CD4-positive, alpha-beta memory T cell (primary cell): ENCODE measurements at regions of chr2 and their contacts with region 1.

Region 1: DNA sequence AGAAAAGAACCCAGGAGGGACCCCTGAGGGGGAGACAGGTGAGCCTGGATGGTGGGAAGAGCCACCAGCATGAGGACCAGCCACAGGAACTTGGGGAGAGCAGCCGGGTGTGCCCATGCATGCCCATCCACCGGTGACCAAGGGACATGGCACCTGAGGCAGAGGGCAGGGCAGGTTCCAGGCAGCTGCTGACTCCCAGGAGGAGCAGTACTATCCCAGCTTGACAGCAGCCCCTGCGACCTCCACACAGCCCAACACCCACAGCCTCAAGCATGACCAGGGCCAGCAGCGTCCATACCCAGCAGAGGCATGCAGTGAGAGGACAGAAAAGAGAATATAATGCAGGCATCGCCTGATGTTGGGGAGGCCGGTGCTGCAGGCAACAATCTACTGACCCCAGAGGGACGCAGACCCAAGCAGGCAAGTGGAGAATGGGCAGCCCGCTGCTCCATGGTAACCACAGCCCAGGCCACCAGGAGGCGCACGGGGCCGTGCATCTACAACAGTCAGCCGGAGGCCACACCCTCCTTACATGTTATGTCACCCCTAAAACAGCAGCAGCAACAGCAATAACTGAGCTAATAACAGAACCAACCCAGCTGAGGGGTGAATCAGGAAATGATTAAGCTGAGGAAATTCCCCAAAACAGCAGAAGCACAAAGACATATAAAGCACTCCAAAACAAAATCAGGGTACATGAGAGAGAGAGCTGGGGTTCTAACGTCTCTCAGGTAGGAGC is 44.1 kb downstream of the ANKMY1 start:
- DNase-seq: peak; percentile 78 to 89 (median 80)
- H3K4me3 ChIP-seq: no peak overlapping the region
- H3K4me3 Mint-ChIP-seq: peak overlapping the region in 3 of 8 donors; percentile 2 to 73 (median 12)
- H3K27ac ChIP-seq: peak overlapping the region; percentile 17
- H3K27ac Mint-ChIP-seq: peak overlapping the region; percentile 16 to 95 (median 87)
- H3K4me1 ChIP-seq: peaks cover 13% of the 10 kb centered on the region
- H3K4me1 Mint-ChIP-seq: peaks cover 7 to 12% (median 11%) of the 10 kb centered on the region in 4 donors
- H3K27me3 ChIP-seq: no peaks in the 10 kb centered on the region
- H3K27me3 Mint-ChIP-seq: no peaks in the 10 kb centered on the region

Region 2: GRCh38 chr2:240553956-240554480 is 40.3 kb after region 1 on chr2:
- CTCF ChIA-PET with region 1: interaction called, 10 read pairs
- POLR2A ChIA-PET with region 1: no interaction called
- intact Hi-C with region 1: no loop called
- DNase-seq: no peak
- H3K4me3 ChIP-seq: no peak overlapping the region
- H3K4me3 Mint-ChIP-seq: no peak overlapping the region
- H3K27ac ChIP-seq: no peak overlapping the region
- H3K27ac Mint-ChIP-seq: no peak overlapping the region
- H3K4me1 ChIP-seq: peaks cover 30% of the 10 kb centered on the region
- H3K4me1 Mint-ChIP-seq: peaks cover 13 to 34% (median 19%) of the 10 kb centered on the region in 4 donors
- H3K27me3 ChIP-seq: no peaks in the 10 kb centered on the region
- H3K27me3 Mint-ChIP-seq: no peaks in the 10 kb centered on the region

Region 3: GRCh38 chr2:240566203-240567136 is 52.8 kb after region 1 on chr2:
- CTCF ChIA-PET with region 1: interaction called, 32 read pairs
- POLR2A ChIA-PET with region 1: interaction called, 33 read pairs
- intact Hi-C with region 1: loop called (anchors 1 kb)
- DNase-seq: peak; percentile 91 to 96 (median 92)
- H3K4me3 ChIP-seq: peak overlapping the region; percentile 79 to 87
- H3K4me3 Mint-ChIP-seq: peak overlapping the region; percentile 90 to 98 (median 94)
- H3K27ac ChIP-seq: peak overlapping the region; percentile 89
- H3K27ac Mint-ChIP-seq: peak overlapping the region; percentile 98 to 99 (median 99)
- H3K4me1 ChIP-seq: peaks cover 86% of the 10 kb centered on the region
- H3K4me1 Mint-ChIP-seq: peaks cover 46 to 89% (median 69%) of the 10 kb centered on the region in 4 donors
- H3K27me3 ChIP-seq: no peaks in the 10 kb centered on the region
- H3K27me3 Mint-ChIP-seq: no peaks in the 10 kb centered on the region

Region 4: DNA sequence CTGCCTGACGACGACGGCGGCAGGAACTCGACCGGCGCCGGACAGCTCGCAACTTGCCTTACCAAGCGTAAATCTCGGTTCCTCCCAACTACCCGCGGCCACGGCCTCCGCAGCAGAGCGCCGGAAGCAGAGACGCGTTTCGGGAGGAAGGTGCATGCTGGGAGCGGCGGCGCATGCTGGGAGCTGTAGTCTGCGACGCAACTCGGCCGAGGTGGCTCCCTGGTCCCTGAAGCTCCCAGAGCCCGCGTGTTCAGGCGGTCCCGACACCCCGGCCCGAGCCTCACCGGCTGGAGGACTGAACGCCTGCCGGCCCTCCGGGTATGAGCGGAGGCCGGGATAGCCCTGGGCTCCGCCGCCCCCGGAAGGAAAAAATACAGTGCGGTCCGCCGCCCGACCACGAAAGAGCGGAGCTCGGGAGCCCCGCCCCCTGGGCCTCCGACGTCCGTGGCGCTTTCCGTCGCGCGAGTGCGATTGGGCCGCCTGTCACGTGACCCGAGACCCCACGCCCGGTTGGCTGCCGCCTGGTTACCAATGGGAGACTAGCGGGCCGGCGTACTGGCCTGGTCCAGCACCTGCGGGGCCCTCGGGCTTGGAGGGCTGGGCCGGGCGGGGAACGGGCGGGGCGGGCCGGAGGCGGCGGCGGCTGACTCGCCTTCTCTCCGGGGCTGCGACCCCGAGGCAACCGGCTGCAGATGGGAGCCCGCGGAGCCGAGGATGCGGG is 72.6 kb after region 1 on chr2 and contains the start of gene CAPN10:
- CTCF ChIA-PET with region 1: interaction called, 57 read pairs
- POLR2A ChIA-PET with region 1: interaction called, 14 read pairs
- intact Hi-C with region 1: loop called (anchors 1 kb)
- DNase-seq: peak; percentile 96 to 98 (median 97)
- H3K4me3 ChIP-seq: peak within 1 kb of the TSS; percentile 63 to 99
- H3K4me3 Mint-ChIP-seq: peak within 1 kb of the TSS; percentile 93 to 98 (median 96)
- H3K27ac ChIP-seq: peak within 1 kb of the TSS; percentile 80
- H3K27ac Mint-ChIP-seq: peak within 1 kb of the TSS; percentile 95 to 98 (median 96)
- H3K4me1 ChIP-seq: peaks cover 38% of the 10 kb centered on the region
- H3K4me1 Mint-ChIP-seq: peaks cover 25 to 63% (median 44%) of the 10 kb centered on the region in 4 donors
- H3K27me3 ChIP-seq: no peaks in the 10 kb centered on the region
- H3K27me3 Mint-ChIP-seq: no peaks in the 10 kb centered on the region
- total RNA-seq, gene CAPN10: 80.6 to 83.0 TPM

Region 5: GRCh38 chr2:240704651-240705050 is 190.9 kb after region 1 on chr2:
- CTCF ChIA-PET with region 1: interaction called, 7 read pairs
- POLR2A ChIA-PET with region 1: no interaction called
- intact Hi-C with region 1: loop called (anchors 10 kb)
- DNase-seq: peak in 4 of 5 donors; percentile 39 to 55 (median 44)
- H3K4me3 ChIP-seq: no peak overlapping the region
- H3K4me3 Mint-ChIP-seq: peak overlapping the region; percentile 22 to 79 (median 63)
- H3K27ac ChIP-seq: no peak overlapping the region
- H3K27ac Mint-ChIP-seq: peak overlapping the region in 5 of 7 donors; percentile 8 to 59 (median 40)
- H3K4me1 ChIP-seq: peaks cover 19% of the 10 kb centered on the region
- H3K4me1 Mint-ChIP-seq: peaks cover 11 to 20% (median 15%) of the 10 kb centered on the region in 4 donors
- H3K27me3 ChIP-seq: no peaks in the 10 kb centered on the region
- H3K27me3 Mint-ChIP-seq: peaks cover 5 to 18% of the 10 kb centered on the region in 2 donors

Region 6: GRCh38 chr2:240840435-240841080 is 326.8 kb after region 1 on chr2:
- CTCF ChIA-PET with region 1: interaction called, 22 read pairs
- POLR2A ChIA-PET with region 1: no interaction called
- intact Hi-C with region 1: loop called (anchors 1 kb)
- DNase-seq: peak in 2 of 5 donors; percentile 15 to 32
- H3K4me3 ChIP-seq: no peak overlapping the region
- H3K4me3 Mint-ChIP-seq: no peak overlapping the region
- H3K27ac ChIP-seq: no peak overlapping the region
- H3K27ac Mint-ChIP-seq: peak overlapping the region in 1 of 7 donors; percentile 22
- H3K4me1 ChIP-seq: no peaks in the 10 kb centered on the region
- H3K4me1 Mint-ChIP-seq: no peaks in the 10 kb centered on the region
- H3K27me3 ChIP-seq: peaks cover 4% of the 10 kb centered on the region
- H3K27me3 Mint-ChIP-seq: peaks cover 3 to 17% of the 10 kb centered on the region in 2 donors